Dorsolateral prefrontal cortex (tissue), 120 donors: ENCODE measurements at regions of chr6 and their contacts with region 1.

Region 1: DNA sequence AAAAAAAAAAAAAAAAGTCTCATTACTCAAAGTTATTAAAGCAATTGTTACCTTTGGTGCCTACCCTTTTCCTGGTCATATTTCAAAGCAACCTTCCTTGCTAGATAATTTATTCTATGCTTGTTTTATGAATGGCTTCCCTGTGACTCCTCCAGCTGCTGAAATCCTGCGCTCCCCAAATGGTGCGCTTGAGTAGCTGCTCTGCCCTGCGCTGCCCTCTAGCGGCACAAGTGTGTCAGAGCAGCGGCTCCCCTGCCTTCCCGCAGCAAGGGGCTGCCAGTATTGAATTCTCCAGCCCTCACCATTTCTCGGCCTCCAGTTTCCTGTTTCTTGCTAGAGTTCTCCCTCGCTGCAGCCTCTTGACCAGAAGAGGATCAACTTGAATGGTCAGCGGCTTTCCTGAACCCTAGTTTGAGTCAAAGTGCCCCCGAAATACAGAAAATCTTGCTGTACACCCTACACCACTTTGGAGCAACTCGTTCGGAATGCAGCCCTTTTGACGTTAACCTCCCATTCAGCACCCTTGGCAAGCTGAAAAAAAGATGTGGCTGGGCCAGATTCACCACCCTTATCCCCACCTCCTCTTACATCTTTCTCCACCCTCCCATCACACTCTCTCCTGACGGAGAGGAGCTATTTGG is 60.4 kb upstream of the KLHL31 start:
- DNase-seq: peak; percentile 64 to 87 (median 76)
- H3K4me3 ChIP-seq: no peak overlapping the region
- H3K27ac ChIP-seq: no peak overlapping the region
- H3K27me3 ChIP-seq: peaks cover 0 to 4% (median 0%) of the 10 kb centered on the region in 45 donors
- CTCF ChIP-seq: peak; percentile 69 to 98 (median 95)

Region 2: DNA sequence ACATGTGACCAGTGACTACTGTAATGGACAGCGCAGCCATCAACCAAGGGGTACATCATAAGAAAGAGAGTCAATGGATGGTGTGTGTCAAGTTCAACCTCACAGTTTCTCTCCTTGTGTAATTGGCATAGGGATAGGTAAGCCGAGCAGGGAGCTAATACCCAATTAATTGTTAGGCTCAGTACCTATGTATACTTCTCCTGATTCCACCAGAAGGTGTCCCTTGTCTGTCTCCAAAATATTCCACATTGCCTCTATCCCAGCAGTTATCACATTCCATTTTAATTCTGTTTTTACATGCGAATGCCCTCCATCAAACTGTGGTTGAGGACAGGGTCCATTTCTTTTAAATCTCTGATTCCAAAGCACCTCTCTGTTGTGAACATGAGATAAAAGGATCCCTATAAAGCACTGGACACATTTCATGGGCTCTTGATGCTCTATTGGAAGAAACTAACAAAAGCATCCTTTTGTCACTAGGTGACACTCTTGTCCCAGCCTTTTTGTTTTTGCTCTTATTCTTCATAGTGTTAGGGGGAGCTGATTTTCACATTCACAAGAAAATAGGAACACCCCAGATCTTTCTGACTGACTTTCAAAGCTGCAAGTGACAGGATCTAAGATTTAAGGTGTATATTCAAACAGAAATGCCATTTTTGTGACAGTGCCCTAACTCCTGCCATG is 621.8 kb before region 1 on chr6:
- intact Hi-C with region 1: loop called in 1 of 2 experiments (anchors 10 kb)
- DNase-seq: no peak
- H3K4me3 ChIP-seq: no peak overlapping the region
- H3K27ac ChIP-seq: peak overlapping the region in 2 of 59 donors; percentile 3 to 15
- H3K27me3 ChIP-seq: no peaks in the 10 kb centered on the region
- CTCF ChIP-seq: peak in 48 of 56 donors; percentile 10 to 63 (median 42)

Region 3: DNA sequence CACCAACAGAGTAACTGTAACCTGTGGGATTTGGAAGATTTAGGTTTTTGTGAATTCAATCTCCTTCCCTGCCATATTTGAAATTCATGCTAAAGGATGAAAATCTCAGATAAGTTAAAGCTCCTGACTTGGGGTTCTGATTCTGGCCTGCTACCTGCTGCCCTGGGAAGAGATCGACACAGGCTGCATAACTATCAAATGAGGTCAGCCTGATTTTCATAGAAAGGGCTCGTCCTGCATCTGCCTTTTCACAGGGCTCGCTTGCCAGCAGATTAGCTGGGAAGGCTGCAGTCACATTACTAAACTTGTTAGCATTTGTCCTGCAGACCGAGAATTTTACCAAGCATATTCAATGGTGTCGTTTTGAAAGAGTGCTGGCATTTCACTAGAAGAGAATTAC is 195.6 kb before region 1 on chr6:
- intact Hi-C with region 1: loop called in 1 of 2 experiments (anchors 10 kb)
- DNase-seq: no peak
- H3K4me3 ChIP-seq: peak overlapping the region in 2 of 59 donors; percentile 16 to 17
- H3K27ac ChIP-seq: peak overlapping the region in 31 of 59 donors; percentile 1 to 68 (median 37)
- H3K27me3 ChIP-seq: no peaks in the 10 kb centered on the region
- CTCF ChIP-seq: no peak

Region 4: DNA sequence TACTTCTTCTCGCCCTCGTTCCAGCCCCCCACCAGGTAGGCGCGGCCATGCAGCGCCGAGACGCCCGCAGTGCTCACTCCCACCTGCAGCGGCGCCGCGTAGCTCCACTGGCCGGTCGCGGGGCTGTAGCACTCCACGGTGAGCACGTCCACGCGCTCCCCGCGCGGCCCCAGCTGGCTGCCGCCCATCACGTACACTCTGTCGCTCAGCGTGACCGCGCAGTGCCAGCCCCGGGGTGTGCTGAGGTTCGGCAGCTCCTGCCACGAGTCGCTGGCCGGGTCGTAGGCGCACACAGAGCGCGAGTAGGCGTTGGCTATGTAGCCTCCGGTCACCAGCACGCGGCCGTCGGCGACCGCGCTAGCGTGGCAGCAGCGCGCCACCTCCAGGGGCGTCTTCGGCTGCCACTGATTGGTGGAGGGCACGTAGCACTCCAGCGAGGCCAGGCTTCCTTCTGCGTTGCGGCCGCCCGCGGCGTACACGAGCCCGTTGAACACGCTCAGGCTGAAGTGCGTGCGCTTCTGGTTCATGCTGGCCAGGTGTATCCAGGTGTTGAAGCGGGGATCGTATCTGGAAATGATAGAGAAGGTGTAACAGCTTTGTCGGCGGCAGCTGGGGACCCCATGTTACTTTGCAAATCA is 74.0 kb before region 1 on chr6:
- intact Hi-C with region 1: loop called in 1 of 2 experiments (anchors 5 kb)
- DNase-seq: peak; percentile 26 to 84 (median 70)
- H3K4me3 ChIP-seq: peak overlapping the region; percentile 58 to 87 (median 71)
- H3K27ac ChIP-seq: peak overlapping the region in 38 of 59 donors; percentile 1 to 77 (median 38)
- H3K27me3 ChIP-seq: no peaks in the 10 kb centered on the region
- CTCF ChIP-seq: peak in 54 of 56 donors; percentile 24 to 77 (median 60)

Region 5: DNA sequence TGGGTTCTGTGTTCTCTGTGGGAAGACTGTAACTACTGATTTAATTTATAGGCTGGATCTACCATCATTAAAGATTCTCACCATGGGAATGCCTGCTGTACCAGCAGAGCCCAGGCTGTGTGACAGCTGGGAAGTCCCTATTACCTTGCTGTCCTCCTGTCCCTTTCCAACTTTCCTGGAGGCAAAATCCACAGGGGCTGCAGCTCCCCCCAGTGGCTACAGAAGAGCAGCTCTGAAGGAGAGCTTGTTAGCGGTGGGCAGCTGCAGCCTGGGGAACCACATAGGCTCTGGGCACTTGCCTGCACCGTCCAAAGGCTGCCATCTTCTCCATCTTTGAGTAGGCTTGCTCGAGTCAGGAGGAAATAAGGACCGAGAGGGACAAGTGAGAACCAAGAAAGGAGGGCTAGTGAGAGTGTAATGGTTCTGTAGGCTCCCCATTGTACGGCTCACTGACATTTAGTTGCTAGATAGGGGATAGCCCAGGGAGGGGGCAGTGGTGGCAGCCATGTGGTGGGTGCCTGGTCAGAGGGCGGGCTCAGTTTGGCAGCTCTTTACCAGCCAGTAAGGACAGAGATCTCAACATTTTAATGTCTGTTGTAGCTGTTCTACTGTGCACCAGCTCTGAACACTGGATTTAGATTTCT is 230.3 kb after region 1 on chr6:
- intact Hi-C with region 1: loop called (anchors 5 to 10 kb)
- DNase-seq: peak; percentile 13 to 85 (median 80)
- H3K4me3 ChIP-seq: no peak overlapping the region
- H3K27ac ChIP-seq: peak overlapping the region in 1 of 59 donors; percentile 26
- H3K27me3 ChIP-seq: no peaks in the 10 kb centered on the region
- CTCF ChIP-seq: peak; percentile 31 to 93 (median 84)